Heart left ventricle (tissue), 16 donors: ENCODE measurements at regions of chr3 and their contacts with region 1.

Region 1: DNA sequence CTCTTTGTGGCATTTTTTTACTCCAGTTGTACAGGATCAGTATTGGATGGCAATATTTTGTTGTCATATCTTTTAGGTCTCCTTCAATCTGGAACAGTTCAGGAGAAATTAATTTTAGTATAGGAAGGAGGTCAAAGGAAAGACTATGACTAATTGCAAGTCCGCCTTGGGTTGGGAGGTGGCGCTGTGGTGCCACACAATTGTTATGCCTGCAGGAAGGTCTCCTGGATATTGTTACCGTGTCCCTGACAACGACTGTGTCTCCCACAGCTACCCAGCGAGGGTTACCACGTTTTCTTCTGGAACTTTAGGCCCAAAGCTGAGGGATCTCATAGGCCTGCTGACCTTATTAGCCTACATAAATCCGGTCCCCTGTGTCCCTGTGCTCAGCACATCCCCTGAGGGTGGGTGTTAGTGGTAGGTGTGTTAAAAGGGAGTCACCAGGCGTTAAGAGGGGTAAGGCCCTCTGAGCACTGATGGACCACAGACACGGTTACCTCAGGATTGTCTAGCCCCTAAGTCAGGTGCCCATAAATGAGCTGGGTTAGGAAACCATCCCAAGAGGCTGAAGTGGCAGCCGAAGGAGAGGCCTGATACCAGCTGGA is 31.5 kb downstream of the KCNAB1 start:
- DNase-seq: peak; percentile 52 to 76 (median 69)
- ATAC-seq: peak; percentile 40 to 87 (median 79)
- H3K4me3 ChIP-seq: no peak overlapping the region
- H3K27ac ChIP-seq: peak overlapping the region in 1 of 12 donors; percentile 73
- H3K4me1 ChIP-seq: peaks cover 0 to 38% (median 17%) of the 10 kb centered on the region in 12 donors
- H3K27me3 ChIP-seq: no peaks in the 10 kb centered on the region
- CTCF ChIP-seq: peak; percentile 53 to 79 (median 74)
- POLR2A ChIP-seq: no peak

Region 2: GRCh38 chr3:155890671-155891190 is 261.2 kb before region 1 on chr3:
- intact Hi-C with region 1: no loop called
- DNase-seq: no peak
- ATAC-seq: peak in 1 of 4 donors; percentile 46
- H3K4me3 ChIP-seq: no peak overlapping the region
- H3K27ac ChIP-seq: no peak overlapping the region
- H3K4me1 ChIP-seq: peaks cover 0 to 29% (median 14%) of the 10 kb centered on the region in 12 donors
- H3K27me3 ChIP-seq: no peaks in the 10 kb centered on the region
- CTCF ChIP-seq: no peak
- POLR2A ChIP-seq: no peak

Region 3: GRCh38 chr3:156382458-156383346 is 230.8 kb after region 1 on chr3:
- intact Hi-C with region 1: loop called in 2 of 10 experiments (anchors 5 to 10 kb)
- DNase-seq: no peak
- ATAC-seq: no peak
- H3K4me3 ChIP-seq: no peak overlapping the region
- H3K27ac ChIP-seq: peak overlapping the region in 6 of 12 donors; percentile 5 to 53 (median 34)
- H3K4me1 ChIP-seq: peaks cover 0 to 29% (median 3%) of the 10 kb centered on the region in 12 donors
- H3K27me3 ChIP-seq: no peaks in the 10 kb centered on the region
- CTCF ChIP-seq: peak in 11 of 12 donors; percentile 16 to 48 (median 35)
- POLR2A ChIP-seq: no peak

Region 4: DNA sequence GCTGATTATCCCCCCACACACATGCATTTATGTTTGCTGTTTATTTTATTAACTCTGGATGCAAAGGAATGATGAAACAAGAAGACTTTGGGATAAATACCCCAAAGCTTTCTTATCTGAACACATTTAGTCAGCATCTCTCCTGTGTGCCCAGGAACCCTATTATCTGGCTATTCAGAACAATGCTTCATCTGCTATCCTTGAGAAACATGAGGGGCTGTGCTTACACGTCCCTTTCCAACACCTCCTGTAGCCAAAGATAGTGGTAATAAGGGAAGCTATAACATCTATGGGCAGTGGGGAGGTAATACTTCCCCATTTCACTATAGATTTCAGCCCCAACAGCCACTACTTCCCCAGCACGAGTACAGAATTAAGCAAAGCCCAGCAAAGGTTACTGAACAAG is 308.3 kb after region 1 on chr3:
- intact Hi-C with region 1: loop called in 1 of 10 experiments (anchors 5 kb)
- DNase-seq: no peak
- ATAC-seq: no peak
- H3K4me3 ChIP-seq: no peak overlapping the region
- H3K27ac ChIP-seq: no peak overlapping the region
- H3K4me1 ChIP-seq: peaks cover 0 to 17% (median 5%) of the 10 kb centered on the region in 12 donors
- H3K27me3 ChIP-seq: no peaks in the 10 kb centered on the region
- CTCF ChIP-seq: no peak
- POLR2A ChIP-seq: no peak

Region 5: GRCh38 chr3:156674046-156674910 is 522.4 kb after region 1 on chr3 and contains the start of gene TIPARP:
- intact Hi-C with region 1: loop called in 3 of 10 experiments (anchors 5 to 10 kb)
- DNase-seq: peak; percentile 99 to 100 (median 100)
- ATAC-seq: peak; percentile 92 to 98 (median 96)
- H3K4me3 ChIP-seq: peak within 1 kb of the TSS; percentile 66 to 97 (median 80)
- H3K27ac ChIP-seq: peak within 1 kb of the TSS; percentile 88 to 99 (median 96)
- H3K4me1 ChIP-seq: peaks cover 0 to 51% (median 29%) of the 10 kb centered on the region in 12 donors
- H3K27me3 ChIP-seq: no peaks in the 10 kb centered on the region
- CTCF ChIP-seq: peak; percentile 55 to 88 (median 77)
- POLR2A ChIP-seq: peak; percentile 81 to 99
- total RNA-seq, gene TIPARP: 17.8 to 46.8 (median 33.8) TPM

Region 6: DNA sequence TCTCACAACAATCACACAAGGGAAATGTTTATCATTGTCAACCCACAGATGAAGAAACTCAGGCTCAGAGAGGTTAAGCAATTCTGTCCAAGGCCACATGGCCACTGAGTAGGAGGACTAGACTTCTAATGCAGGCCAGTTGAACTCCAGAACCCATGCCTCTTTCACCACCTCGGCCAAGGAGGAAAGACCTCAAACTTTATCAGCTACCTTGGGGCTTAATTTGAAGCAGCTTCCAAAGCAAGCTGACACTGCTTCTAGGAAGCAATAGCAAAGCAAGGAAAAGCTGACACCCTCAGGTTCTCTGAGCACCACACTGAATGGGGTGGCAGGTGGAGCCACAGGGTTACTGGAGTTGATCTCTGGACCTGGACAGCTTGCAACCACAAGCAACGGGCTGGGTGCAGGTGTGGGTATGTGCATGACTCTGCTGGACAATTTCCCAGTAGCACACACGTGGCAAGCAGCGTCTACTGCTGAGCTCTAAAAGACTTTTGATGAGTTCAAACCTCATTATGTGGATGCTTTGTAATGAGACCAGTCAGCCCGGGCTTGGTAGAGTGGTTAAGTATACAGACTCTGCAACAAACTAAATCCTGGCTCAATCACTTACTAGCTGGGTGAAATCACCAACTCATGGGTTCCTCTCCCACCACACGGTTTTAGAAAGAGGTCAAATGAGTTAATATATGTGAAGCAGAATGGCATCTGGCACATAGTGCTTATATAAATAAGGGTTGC is 984.9 kb after region 1 on chr3:
- intact Hi-C with region 1: loop called in 5 of 10 experiments (anchors 5 kb)
- DNase-seq: no peak
- ATAC-seq: peak; percentile 10 to 60 (median 20)
- H3K4me3 ChIP-seq: no peak overlapping the region
- H3K27ac ChIP-seq: peak overlapping the region; percentile 19 to 71 (median 56)
- H3K4me1 ChIP-seq: peaks cover 3 to 57% (median 36%) of the 10 kb centered on the region in 12 donors
- H3K27me3 ChIP-seq: no peaks in the 10 kb centered on the region
- CTCF ChIP-seq: no peak
- POLR2A ChIP-seq: no peak